Keratinocyte (primary cell): ENCODE measurements at regions of chr1 and their contacts with region 1.

Region 1: DNA sequence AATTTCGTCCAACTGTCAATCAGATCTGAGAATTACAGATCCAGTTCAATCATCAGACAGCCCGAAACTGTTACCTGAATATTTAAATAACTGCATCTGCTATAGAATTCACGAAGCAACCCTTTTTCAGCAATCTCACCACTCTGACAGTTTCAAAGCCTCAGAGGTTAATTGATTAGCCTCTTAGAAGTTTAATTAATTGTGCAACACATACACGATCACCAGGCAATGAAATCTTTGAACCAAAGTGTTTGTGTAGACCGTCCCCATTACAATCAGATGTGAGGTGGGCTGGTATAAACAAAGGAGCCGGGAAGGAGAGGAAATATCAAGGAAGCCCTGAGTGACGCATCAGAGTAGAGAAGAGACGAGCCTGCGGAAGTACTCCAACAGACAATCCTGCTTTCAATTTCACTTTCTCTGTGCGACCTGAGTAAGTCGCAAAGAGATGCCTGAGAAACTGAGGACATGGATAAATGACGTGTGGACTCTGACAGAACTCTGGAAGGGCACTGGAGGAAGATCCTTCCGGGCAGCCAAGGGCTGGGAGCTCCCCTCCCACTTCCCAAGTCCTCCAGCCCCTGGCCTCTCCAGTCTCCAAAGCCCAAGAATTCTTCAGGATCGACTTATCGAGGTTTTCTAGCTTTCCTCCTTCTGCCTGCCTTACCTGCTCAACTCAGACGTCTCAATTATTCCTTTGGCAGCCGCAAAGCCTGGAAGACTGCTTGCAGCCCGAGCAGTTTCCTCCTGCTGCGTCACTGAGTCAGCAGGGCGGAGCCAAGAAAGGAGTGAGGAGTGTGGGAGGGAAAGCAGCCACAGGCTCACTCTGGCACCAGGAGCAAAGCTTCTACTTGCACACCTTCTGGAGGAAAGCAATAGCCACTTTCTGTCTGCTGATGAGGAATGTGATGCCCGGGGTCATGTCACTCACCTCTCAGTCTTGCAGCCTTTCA is at the start of gene RNASEL:
- DNase-seq: no peak
- H3K4me3 ChIP-seq: peak within 1 kb of the TSS; percentile 48 to 87 (median 68)
- H3K27ac ChIP-seq: peak within 1 kb of the TSS; percentile 75
- H3K4me1 ChIP-seq: peaks cover 4% of the 10 kb centered on the region
- H3K27me3 ChIP-seq: no peaks in the 10 kb centered on the region
- CTCF ChIP-seq: no peak
- polyA plus RNA-seq, gene RNASEL: 3.6 to 4.7 TPM (median 3.9 TPM) in 3 replicates

Region 2: DNA sequence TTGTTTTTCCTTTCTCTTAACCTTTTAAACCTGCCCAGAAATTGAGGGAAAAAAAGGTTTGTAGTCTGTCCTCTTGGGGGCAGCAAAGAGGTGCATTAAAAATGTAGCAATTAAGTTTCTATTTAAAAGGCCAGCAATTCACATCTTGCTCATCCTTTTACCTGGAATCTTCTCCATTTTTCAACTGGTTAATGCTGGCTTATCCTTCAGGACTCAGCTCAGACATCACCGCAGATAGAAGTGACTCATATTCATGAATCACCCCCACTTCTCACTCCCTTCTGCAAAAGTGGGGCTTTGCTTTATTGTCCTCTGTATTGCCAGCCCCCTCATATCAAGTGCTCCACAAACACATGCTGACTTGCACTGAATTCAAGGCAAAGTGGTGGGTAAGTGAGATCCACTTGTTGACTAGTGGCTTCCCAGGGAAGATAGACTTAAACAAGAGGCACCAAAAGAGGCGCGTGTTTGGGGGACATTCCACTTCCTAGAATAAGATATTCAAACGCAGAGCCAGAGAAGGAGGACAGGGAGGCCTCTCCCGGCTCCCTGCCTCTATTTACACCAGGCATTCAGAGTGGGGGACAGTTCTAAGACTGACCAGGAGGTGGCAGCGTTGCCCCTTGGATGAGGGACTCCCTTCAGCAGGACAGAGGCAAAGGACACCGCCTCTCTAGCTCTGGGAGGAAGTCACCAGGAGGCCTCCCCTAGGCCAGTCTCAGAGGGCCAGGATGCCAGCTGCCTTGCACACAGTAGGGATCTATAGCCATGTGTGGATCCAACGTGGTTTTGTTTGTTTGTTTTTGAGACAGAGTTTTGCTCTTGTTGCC is 504.1 kb before region 1 on chr1:
- dilution Hi-C with region 1: loop called (anchors 25 kb)
- DNase-seq: peak; percentile 55
- H3K4me3 ChIP-seq: no peak overlapping the region
- H3K27ac ChIP-seq: peak overlapping the region; percentile 32
- H3K4me1 ChIP-seq: peaks cover 24% of the 10 kb centered on the region
- H3K27me3 ChIP-seq: no peaks in the 10 kb centered on the region
- CTCF ChIP-seq: peak; percentile 79 to 93 (median 88)

Region 3: GRCh38 chr1:182249201-182249676 is 339.5 kb before region 1 on chr1:
- dilution Hi-C with region 1: no loop called
- DNase-seq: no peak
- H3K4me3 ChIP-seq: no peak overlapping the region
- H3K27ac ChIP-seq: no peak overlapping the region
- H3K4me1 ChIP-seq: peaks cover 3% of the 10 kb centered on the region
- H3K27me3 ChIP-seq: no peaks in the 10 kb centered on the region
- CTCF ChIP-seq: no peak

Region 4: DNA sequence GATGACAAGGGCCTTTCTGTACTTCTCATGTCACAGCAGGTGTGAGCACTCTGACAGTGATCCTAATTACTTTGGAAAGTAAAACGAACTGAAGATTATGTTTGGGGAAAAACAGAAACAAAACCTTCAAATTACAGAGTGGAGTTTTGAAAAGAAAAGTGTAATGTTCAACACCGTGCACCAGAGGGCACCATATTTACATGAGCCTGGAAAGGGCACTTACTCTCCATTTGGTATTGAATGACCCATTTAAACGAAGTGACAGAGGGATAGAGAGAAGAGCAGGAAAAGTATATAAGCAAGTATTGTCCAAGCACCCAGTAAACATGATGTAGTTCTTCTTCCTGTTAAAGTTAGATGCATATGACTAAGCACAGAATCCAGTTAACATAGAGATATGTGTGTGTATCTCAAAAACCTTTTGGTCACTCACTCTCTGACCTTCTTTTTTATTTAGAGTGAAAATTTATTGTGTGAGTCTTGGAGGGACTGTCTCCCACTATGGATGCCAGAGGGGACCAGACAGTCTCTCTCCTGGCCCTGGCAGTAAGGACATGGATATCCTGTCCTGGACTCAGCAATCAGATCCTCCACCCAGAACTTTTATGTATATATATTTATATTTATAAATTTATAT is 142.6 kb before region 1 on chr1:
- dilution Hi-C with region 1: loop called (anchors 25 kb)
- DNase-seq: no peak
- H3K4me3 ChIP-seq: no peak overlapping the region
- H3K27ac ChIP-seq: no peak overlapping the region
- H3K4me1 ChIP-seq: no peaks in the 10 kb centered on the region
- H3K27me3 ChIP-seq: no peaks in the 10 kb centered on the region
- CTCF ChIP-seq: peak; percentile 40 to 72 (median 68)

Region 5: GRCh38 chr1:182556279-182556678 is 32.5 kb before region 1 on chr1:
- dilution Hi-C with region 1: no loop called
- DNase-seq: no peak
- H3K4me3 ChIP-seq: no peak overlapping the region
- H3K27ac ChIP-seq: no peak overlapping the region
- H3K4me1 ChIP-seq: no peaks in the 10 kb centered on the region
- H3K27me3 ChIP-seq: no peaks in the 10 kb centered on the region
- CTCF ChIP-seq: no peak

Region 6: DNA sequence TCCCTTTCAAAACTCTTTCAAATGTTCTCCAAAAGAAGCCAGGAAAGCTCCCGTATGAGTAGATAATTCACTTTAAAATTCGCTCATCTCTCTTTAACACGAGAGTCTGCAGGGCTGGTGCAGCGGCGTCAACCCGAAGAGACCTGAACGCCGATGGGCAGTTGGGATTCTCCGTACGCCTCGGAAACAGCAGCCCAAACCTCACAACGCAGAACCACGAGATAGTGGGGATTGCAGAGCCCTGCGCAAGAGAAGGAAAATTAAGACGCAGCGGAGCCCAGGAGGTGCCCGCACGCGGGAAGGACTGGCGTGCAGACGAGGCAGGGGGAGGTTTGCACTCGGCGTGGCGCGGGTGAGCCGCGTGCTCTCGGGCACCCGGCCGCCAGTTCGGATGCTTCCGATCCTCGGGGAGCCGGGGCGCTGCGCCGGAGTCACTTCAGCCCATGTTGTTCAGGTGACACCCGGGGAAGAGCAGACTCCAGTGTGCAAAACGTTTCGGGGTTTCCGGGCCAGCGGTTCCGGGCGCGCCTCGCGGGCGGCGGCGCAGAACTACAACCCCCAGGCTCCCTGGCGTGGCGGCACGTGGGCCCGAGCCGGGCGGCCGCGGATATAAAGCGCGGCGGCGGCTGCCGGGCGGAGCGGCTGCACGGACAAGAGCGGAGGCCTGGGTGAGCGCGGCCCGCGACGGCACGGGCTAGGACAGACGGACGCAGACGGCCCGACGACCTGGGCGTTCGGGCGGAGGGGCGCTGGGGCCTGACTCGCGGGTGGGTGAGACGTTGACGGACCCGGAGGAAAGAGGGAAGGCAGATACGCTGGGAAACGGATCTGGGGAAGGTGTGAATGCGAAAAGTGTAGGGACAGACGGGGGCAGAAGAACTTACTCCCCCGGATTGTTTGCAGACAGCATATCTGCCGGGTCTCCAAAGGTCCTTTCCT is 200.6 kb after region 1 on chr1 and contains the start of gene NPL:
- dilution Hi-C with region 1: loop called (anchors 25 kb)
- DNase-seq: no peak
- H3K4me3 ChIP-seq: peak within 1 kb of the TSS; percentile 50 to 78 (median 73)
- H3K27ac ChIP-seq: no peak within 1 kb of the TSS
- H3K4me1 ChIP-seq: peaks cover 9% of the 10 kb centered on the region
- H3K27me3 ChIP-seq: peaks cover 7% of the 10 kb centered on the region
- CTCF ChIP-seq: no peak
- polyA plus RNA-seq, gene NPL: 4.9 to 9.0 TPM (median 7.3 TPM) in 3 replicates

Region 7: GRCh38 chr1:183070923-183071618 is 482.3 kb after region 1 on chr1:
- dilution Hi-C with region 1: no loop called
- DNase-seq: no peak
- H3K4me3 ChIP-seq: no peak overlapping the region
- H3K27ac ChIP-seq: no peak overlapping the region
- H3K4me1 ChIP-seq: peaks cover 21% of the 10 kb centered on the region
- H3K27me3 ChIP-seq: no peaks in the 10 kb centered on the region
- CTCF ChIP-seq: no peak